BJ (cell line): ENCODE measurements at regions of chr5 and their contacts with region 1.

Region 1: GRCh38 chr5:134041570-134042411 is 37.0 kb upstream of the VDAC1 start:
- DNase-seq: no peak
- H3K4me3 ChIP-seq: no peak overlapping the region
- H3K27me3 ChIP-seq: peaks cover 12% of the 10 kb centered on the region
- CTCF ChIP-seq: no peak

Region 2: DNA sequence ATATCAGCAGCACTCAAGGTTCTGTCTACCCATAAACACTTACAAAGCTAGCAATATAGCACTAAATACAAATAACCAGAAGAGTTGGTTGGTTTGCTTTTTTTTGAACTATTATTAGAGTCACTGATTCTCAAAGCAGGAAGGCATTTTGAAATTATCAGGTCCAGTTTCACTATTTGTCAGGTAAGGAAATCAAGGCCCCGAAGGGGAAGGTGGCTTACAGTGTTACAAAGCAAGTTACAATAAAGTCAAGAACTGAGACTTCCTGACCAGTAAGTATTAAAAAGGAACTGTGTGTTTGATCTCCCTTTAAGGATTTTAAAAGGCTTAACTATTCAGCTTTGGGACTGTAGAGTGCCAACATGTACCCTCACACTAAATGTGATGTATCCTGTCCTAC is 84.2 kb before region 1 on chr5:
- CTCF ChIA-PET with region 1: no interaction called
- POLR2A ChIA-PET with region 1: no interaction called
- DNase-seq: no peak
- H3K4me3 ChIP-seq: no peak overlapping the region
- H3K27me3 ChIP-seq: no peaks in the 10 kb centered on the region
- CTCF ChIP-seq: no peak

Region 3: GRCh38 chr5:134026521-134027268 is 15.1 kb before region 1 on chr5:
- CTCF ChIA-PET with region 1: interaction called, 24 read pairs
- POLR2A ChIA-PET with region 1: no interaction called
- DNase-seq: no peak
- H3K4me3 ChIP-seq: no peak overlapping the region
- H3K27me3 ChIP-seq: peaks cover 19% of the 10 kb centered on the region
- CTCF ChIP-seq: peak; percentile 56

Region 4: DNA sequence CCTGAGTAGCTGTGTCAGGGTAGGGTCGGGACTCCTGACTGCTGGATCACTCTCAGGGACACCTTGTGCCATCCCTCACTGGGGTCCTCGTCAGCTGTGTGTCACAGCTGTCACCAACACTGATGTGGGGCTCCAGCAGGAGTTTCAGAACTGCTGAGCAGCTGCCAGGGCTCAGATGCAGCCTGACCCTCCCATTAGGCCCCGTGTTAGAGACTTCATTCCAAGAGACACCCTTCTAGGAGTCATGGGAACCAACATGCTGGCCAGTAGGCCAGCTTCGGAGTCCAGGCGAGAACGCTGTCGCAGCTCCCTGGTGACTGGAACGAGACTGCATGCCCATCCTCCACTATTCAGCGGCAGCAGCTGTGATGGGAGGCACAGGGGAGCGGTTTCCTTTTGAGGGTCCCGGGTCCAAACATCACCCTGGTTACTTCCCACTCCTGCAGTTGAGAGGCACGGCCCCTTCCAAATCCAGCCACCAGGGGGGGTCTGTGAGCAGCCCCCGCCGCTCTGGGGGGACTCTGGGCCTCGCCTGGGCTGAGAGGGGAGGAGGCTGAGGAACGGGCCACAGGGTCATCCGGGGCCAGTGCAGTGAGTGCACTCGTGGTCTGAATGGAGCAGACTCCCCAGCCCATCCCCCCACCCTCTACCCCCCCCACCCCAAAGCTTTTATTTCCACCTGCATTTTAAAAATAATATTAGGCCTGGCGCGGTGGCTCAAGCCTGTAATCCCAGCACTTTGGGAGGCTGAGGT is 60.1 kb after region 1 on chr5:
- CTCF ChIA-PET with region 1: interaction called, 43 read pairs
- POLR2A ChIA-PET with region 1: no interaction called
- DNase-seq: no peak
- H3K4me3 ChIP-seq: no peak overlapping the region
- H3K27me3 ChIP-seq: peaks cover 3% of the 10 kb centered on the region; the same call in 1 of the 2 replicates
- CTCF ChIP-seq: peak; percentile 95

Region 5: GRCh38 chr5:134145779-134146581 is 104.2 kb after region 1 on chr5:
- CTCF ChIA-PET with region 1: interaction called, 381 read pairs
- POLR2A ChIA-PET with region 1: no interaction called
- DNase-seq: no peak
- H3K4me3 ChIP-seq: no peak overlapping the region
- H3K27me3 ChIP-seq: no peaks in the 10 kb centered on the region
- CTCF ChIP-seq: peak; percentile 95

Region 6: DNA sequence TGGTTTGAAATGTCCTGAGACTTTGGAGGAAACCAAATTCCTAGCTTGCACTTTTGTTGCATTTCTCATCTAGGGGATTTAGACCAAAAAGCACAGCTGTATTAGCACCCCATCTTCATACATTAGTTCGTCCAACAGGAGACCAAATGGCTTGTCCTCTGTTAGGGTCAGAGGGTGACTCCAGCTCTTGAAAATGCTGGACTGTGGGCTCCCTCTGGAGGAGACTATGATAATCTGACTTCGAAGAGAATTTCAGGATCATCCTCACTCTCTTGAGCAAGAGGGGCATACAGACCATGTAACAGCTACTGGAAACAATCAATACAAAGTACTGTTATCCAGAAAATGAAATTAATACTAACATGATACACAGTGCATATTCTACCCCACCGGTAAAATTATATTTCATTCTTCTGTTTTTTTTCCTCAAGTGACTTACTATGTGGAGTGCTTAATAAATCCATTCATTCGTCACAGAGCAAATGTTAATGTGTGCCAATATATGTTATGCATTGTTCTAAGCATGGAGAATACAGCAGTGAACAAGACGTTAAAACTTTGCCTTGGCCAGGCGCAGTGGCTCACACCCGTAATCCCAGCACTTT is 247.8 kb after region 1 on chr5:
- CTCF ChIA-PET with region 1: interaction called, 14 read pairs
- POLR2A ChIA-PET with region 1: no interaction called
- DNase-seq: peak; percentile 19
- H3K4me3 ChIP-seq: no peak overlapping the region
- H3K27me3 ChIP-seq: no peaks in the 10 kb centered on the region; the same call in 1 of the 2 replicates
- CTCF ChIP-seq: peak; percentile 69